Head of caudate nucleus (tissue), 42 donors: ENCODE measurements at regions of chr16 and their contacts with region 1.

Region 1: GRCh38 chr16:74611721-74612120 is 4.8 kb upstream of the GLG1 start:
- DNase-seq: no peak

Region 2: DNA sequence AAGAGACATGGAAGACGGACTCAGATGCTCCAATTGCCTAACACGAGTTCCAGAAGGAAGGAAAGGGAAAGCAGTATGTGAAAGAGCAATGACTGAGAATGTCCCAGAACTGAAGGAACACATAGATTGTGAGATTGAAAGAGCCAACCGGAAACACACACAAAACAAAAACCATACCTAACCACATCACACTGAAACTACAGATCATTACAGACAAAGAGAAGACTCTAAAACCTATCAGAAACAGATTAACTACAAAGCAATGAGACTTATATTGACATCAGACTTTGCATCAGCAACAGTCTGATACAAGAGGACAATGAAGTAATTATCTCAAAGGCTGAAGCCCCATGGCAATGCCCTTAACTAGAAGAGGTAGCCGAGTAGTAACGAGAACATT is 144.8 kb before region 1 on chr16:
- intact Hi-C with region 1: loop called (anchors 10 kb)
- DNase-seq: no peak

Region 3: GRCh38 chr16:74842413-74842812 is 230.7 kb after region 1 on chr16:
- intact Hi-C with region 1: no loop called
- DNase-seq: no peak